CD4-positive, alpha-beta memory T cell (primary cell): ENCODE measurements at regions of chr14 and their contacts with region 1.

Region 1: DNA sequence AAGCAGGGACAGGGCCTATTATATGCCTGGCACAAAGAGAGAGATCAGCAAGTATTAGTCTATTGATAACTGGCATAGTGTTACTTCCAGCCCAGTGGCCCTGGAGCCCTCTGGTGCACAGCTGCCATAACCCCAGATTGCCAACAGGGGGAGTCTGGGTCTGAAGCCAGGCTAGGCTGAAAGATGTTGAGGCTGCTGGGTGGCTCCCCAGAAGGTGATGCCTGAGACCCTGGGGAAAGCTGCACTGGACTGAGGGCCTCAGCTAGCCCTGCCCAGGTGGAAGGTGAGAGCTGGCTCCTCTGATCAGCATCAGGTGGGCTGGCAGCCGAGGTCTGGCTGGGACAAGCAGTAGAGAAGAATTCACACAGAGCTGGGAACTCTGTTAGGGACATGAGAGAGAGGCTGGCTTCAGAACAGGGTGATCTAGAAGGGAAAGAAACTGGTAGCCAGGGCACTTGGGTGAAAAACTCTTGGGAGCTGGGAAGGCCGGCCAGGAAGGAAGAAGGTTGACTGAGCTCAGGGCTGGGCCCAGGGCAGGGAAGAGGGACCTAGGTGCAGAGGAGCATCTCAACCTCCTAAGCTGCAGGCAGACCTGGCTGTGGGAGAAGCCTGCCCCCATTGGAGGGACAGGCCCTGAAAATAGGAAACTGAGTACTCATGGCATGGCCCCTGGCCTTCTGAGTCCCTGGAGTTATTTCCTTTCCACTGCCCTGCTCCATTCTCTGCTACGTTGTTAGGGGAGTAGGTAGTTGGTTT is 3.9 kb downstream of the GZMH start:
- DNase-seq: peak; percentile 41 to 51 (median 50)
- H3K4me3 ChIP-seq: no peak overlapping the region
- H3K4me3 Mint-ChIP-seq: peak overlapping the region in 2 of 8 donors; percentile 36 to 59
- H3K27ac ChIP-seq: no peak overlapping the region
- H3K27ac Mint-ChIP-seq: peak overlapping the region in 4 of 7 donors; percentile 35 to 64 (median 57)
- H3K4me1 ChIP-seq: peaks cover 19% of the 10 kb centered on the region
- H3K4me1 Mint-ChIP-seq: peaks cover 10 to 29% (median 17%) of the 10 kb centered on the region in 4 donors
- H3K27me3 ChIP-seq: peaks cover 4% of the 10 kb centered on the region
- H3K27me3 Mint-ChIP-seq: peaks cover 2 to 5% of the 10 kb centered on the region in 2 donors

Region 2: GRCh38 chr14:24456980-24457379 is 148.6 kb before region 1 on chr14:
- CTCF ChIA-PET with region 1: no interaction called
- POLR2A ChIA-PET with region 1: no interaction called
- intact Hi-C with region 1: no loop called
- DNase-seq: no peak
- H3K4me3 ChIP-seq: no peak overlapping the region
- H3K4me3 Mint-ChIP-seq: no peak overlapping the region
- H3K27ac ChIP-seq: no peak overlapping the region
- H3K27ac Mint-ChIP-seq: no peak overlapping the region
- H3K4me1 ChIP-seq: no peaks in the 10 kb centered on the region
- H3K4me1 Mint-ChIP-seq: peaks cover 0 to 4% (median 1%) of the 10 kb centered on the region in 4 donors
- H3K27me3 ChIP-seq: no peaks in the 10 kb centered on the region
- H3K27me3 Mint-ChIP-seq: no peaks in the 10 kb centered on the region

Region 3: GRCh38 chr14:24481622-24482324 is 123.8 kb before region 1 on chr14:
- CTCF ChIA-PET with region 1: interaction called, 12 read pairs
- POLR2A ChIA-PET with region 1: no interaction called
- intact Hi-C with region 1: no loop called
- DNase-seq: peak in 4 of 5 donors; percentile 18 to 38 (median 25)
- H3K4me3 ChIP-seq: no peak overlapping the region
- H3K4me3 Mint-ChIP-seq: peak overlapping the region in 5 of 8 donors; percentile 38 to 61 (median 51)
- H3K27ac ChIP-seq: no peak overlapping the region
- H3K27ac Mint-ChIP-seq: peak overlapping the region in 4 of 7 donors; percentile 4 to 57 (median 26)
- H3K4me1 ChIP-seq: peaks cover 17% of the 10 kb centered on the region
- H3K4me1 Mint-ChIP-seq: peaks cover 0 to 29% (median 20%) of the 10 kb centered on the region in 4 donors
- H3K27me3 ChIP-seq: no peaks in the 10 kb centered on the region
- H3K27me3 Mint-ChIP-seq: no peaks in the 10 kb centered on the region

Region 4: GRCh38 chr14:24665440-24665991 is 59.9 kb after region 1 on chr14:
- CTCF ChIA-PET with region 1: interaction called, 10 read pairs
- POLR2A ChIA-PET with region 1: no interaction called
- intact Hi-C with region 1: no loop called
- DNase-seq: no peak
- H3K4me3 ChIP-seq: peak overlapping the region in 1 of 2 donors; percentile 11
- H3K4me3 Mint-ChIP-seq: peak overlapping the region; percentile 40 to 80 (median 65)
- H3K27ac ChIP-seq: no peak overlapping the region
- H3K27ac Mint-ChIP-seq: peak overlapping the region in 3 of 7 donors; percentile 53 to 79 (median 73)
- H3K4me1 ChIP-seq: peaks cover 15% of the 10 kb centered on the region
- H3K4me1 Mint-ChIP-seq: peaks cover 11 to 22% (median 13%) of the 10 kb centered on the region in 4 donors
- H3K27me3 ChIP-seq: no peaks in the 10 kb centered on the region
- H3K27me3 Mint-ChIP-seq: peaks cover 0 to 1% of the 10 kb centered on the region in 2 donors

Region 5: DNA sequence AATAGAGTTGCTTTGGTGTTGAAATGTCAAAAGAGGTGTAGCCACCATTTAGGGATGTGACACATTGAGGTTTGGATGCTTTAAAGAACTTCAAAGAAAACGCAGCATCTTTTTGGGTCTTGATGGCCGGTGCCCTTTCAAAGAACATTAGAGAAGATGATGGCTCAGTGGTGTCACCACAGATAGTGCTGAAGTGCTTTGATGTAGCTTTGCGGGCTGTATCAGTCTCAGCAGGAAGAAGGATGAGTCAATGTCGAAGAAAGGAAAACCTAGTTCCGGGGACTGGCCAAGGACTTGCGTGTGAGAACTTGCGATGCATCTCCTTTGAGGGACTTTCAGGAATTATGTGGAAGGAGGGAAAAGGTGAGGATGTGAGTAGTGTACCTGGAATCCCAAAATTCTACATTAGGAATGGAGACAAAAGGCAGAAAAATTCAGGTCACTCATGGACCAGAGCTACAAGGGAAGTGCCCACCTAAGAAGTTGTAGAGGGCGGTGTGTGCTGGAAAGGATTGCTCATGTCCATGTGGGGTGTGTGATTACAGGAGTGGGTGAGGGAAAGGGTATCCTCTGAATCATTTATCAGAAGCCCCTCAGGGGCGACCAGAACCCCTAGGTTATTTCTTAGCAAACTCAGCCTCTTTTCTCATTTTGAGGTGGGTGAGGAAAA is 68.1 kb after region 1 on chr14:
- CTCF ChIA-PET with region 1: interaction called, 31 read pairs
- POLR2A ChIA-PET with region 1: interaction called, 7 read pairs
- intact Hi-C with region 1: no loop called
- DNase-seq: peak; percentile 74 to 88 (median 76)
- H3K4me3 ChIP-seq: peak overlapping the region; percentile 39 to 49
- H3K4me3 Mint-ChIP-seq: peak overlapping the region; percentile 76 to 92 (median 84)
- H3K27ac ChIP-seq: peak overlapping the region; percentile 25
- H3K27ac Mint-ChIP-seq: peak overlapping the region; percentile 89 to 97 (median 93)
- H3K4me1 ChIP-seq: peaks cover 31% of the 10 kb centered on the region
- H3K4me1 Mint-ChIP-seq: peaks cover 26 to 48% (median 34%) of the 10 kb centered on the region in 4 donors
- H3K27me3 ChIP-seq: no peaks in the 10 kb centered on the region
- H3K27me3 Mint-ChIP-seq: no peaks in the 10 kb centered on the region